Esophagus muscularis mucosa (tissue), 4 donors: ENCODE measurements at regions of chr19 and their contacts with region 1.

Region 1: GRCh38 chr19:18408053-18408476 is 10.6 kb upstream of the LRRC25 start:
- DNase-seq: no peak
- H3K4me3 ChIP-seq: no peak overlapping the region
- H3K27ac ChIP-seq: no peak overlapping the region
- H3K4me1 ChIP-seq: peaks cover 0 to 7% (median 3%) of the 10 kb centered on the region in 4 donors
- H3K27me3 ChIP-seq: no peaks in the 10 kb centered on the region
- CTCF ChIP-seq: peak in 1 of 3 experiments; percentile 40
- EP300 ChIP-seq: no peak
- POLR2A ChIP-seq: no peak

Region 2: GRCh38 chr19:18349524-18350128 is 58.4 kb before region 1 on chr19:
- intact Hi-C with region 1: loop called (anchors 2 kb)
- DNase-seq: no peak
- H3K4me3 ChIP-seq: no peak overlapping the region
- H3K27ac ChIP-seq: no peak overlapping the region
- H3K4me1 ChIP-seq: peaks cover 0 to 7% (median 2%) of the 10 kb centered on the region in 4 donors
- H3K27me3 ChIP-seq: no peaks in the 10 kb centered on the region
- CTCF ChIP-seq: peak; percentile 59 to 81 (median 75)
- EP300 ChIP-seq: no peak
- POLR2A ChIP-seq: no peak

Region 3: GRCh38 chr19:18388100-18388959 is 19.7 kb before region 1 on chr19:
- intact Hi-C with region 1: loop called (anchors 2 kb)
- DNase-seq: no peak
- H3K4me3 ChIP-seq: peak overlapping the region; percentile 36 to 55 (median 42)
- H3K27ac ChIP-seq: peak overlapping the region; percentile 21 to 58 (median 50)
- H3K4me1 ChIP-seq: peaks cover 12 to 33% (median 29%) of the 10 kb centered on the region in 4 donors
- H3K27me3 ChIP-seq: peaks cover 0 to 24% (median 0%) of the 10 kb centered on the region in 4 donors
- CTCF ChIP-seq: peak in 2 of 3 experiments; percentile 96 to 99
- EP300 ChIP-seq: no peak
- POLR2A ChIP-seq: no peak